Activated CD8-positive, alpha-beta memory T cell treated with anti-CD3 and anti-CD28 coated beads, Interleukin-2, amount 10 ng/mL, durations not matched to agents 7 days and 5 days (primary cell): ENCODE measurements at regions of chr19 and their contacts with region 1.

Region 1: DNA sequence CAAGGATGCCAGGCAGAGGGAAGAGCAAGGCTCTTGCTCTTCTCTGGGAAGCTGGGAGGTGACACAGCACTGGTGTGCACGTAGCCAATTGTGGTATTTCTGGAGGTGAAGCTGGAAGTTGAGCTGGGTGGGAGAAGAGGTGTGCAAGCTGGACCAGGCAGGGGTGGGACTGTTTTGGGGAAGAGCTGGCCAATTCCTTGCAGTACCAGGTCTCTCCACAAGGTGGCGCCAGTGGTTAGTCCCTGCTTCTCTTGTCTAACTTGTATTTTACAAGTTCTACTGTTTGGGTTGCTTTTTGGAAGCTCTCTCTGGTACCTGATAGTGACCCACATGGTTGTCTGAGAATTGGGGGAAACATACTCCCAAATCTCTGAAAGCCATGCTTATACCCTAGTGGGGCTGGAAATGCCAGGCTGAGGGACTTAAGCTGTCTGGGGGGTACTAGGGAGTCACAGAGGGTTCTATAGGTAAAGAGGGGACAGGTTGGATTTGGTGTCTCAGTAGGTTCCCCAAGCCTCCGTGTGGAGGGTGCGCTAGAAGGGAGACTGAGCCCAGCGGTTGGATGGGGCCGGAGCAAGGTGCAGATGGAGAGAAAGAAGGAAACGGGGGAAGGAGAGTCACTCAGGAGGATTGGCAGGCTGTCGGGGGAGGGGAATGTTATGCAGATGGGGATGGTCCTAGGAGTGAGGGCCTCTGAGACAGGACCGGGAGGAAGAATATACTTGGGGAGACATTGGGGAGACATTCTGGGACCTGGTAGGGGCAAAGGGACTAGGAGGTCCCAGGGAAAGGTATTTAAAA is 3.0 kb downstream of the HPN start:
- DNase-seq: peak; percentile 66
- ATAC-seq: no peak
- H3K4me3 Mint-ChIP-seq: no peak overlapping the region
- H3K27ac Mint-ChIP-seq: no peak overlapping the region
- H3K4me1 Mint-ChIP-seq: peaks cover 17% of the 10 kb centered on the region
- H3K27me3 Mint-ChIP-seq: peaks cover 10% of the 10 kb centered on the region

Region 2: GRCh38 chr19:35033067-35034004 is 11.2 kb before region 1 on chr19:
- CTCF ChIA-PET with region 1: interaction called, 12 read pairs
- DNase-seq: no peak
- ATAC-seq: no peak
- H3K4me3 Mint-ChIP-seq: no peak overlapping the region
- H3K27ac Mint-ChIP-seq: no peak overlapping the region
- H3K4me1 Mint-ChIP-seq: peaks cover 5% of the 10 kb centered on the region
- H3K27me3 Mint-ChIP-seq: peaks cover 27% of the 10 kb centered on the region

Region 3: DNA sequence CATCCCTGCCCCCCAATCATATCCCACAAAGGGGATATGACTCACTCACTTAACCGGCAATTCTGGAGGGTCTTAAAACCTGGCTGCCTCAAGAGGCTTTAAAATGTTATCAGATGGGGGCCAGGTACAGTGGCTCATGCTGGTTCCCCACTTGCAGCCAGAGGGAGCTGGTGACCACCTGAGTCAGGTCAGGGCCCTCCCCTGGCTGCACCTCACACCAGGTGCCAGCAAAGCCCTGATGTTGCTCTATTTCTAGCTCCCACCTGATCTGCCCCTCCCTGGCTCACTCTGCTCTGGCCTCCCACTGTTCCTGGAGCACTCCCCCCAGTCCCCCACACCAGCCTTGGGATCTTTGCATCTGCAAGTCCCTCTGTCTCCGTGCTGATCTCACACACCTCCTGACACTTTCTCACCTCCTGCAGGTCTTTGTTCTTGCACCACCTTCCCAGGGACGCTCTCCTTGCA is 11.2 kb after region 1 on chr19:
- CTCF ChIA-PET with region 1: interaction called, 18 read pairs
- DNase-seq: no peak
- ATAC-seq: no peak
- H3K4me3 Mint-ChIP-seq: no peak overlapping the region
- H3K27ac Mint-ChIP-seq: no peak overlapping the region
- H3K4me1 Mint-ChIP-seq: no peaks in the 10 kb centered on the region
- H3K27me3 Mint-ChIP-seq: peaks cover 8% of the 10 kb centered on the region

Region 4: DNA sequence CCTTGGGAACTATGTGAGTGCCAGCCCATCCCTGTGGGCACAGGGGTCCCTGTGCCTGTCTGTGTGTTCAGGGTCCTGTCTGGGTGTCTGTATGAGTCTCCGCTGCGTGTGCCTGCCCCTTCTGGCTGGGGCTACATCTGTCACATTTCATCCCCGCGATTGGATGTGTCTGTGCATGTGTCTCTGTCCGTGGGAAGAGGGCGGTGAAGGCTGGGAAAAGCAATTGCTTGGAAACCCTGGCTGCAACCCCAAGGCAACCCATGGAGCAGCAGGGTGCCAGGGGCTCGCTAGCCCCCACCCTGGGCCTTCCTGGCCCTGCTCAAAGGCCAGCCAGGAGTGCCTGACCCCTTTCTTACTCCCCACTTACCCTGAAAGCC is 248.8 kb after region 1 on chr19:
- CTCF ChIA-PET with region 1: no interaction called
- DNase-seq: no peak
- ATAC-seq: no peak
- H3K4me3 Mint-ChIP-seq: no peak overlapping the region
- H3K27ac Mint-ChIP-seq: no peak overlapping the region
- H3K4me1 Mint-ChIP-seq: peaks cover 8% of the 10 kb centered on the region
- H3K27me3 Mint-ChIP-seq: no peaks in the 10 kb centered on the region